SK-N-SH (cell line): ENCODE measurements at regions of chr10 and their contacts with region 1.

Region 1: DNA sequence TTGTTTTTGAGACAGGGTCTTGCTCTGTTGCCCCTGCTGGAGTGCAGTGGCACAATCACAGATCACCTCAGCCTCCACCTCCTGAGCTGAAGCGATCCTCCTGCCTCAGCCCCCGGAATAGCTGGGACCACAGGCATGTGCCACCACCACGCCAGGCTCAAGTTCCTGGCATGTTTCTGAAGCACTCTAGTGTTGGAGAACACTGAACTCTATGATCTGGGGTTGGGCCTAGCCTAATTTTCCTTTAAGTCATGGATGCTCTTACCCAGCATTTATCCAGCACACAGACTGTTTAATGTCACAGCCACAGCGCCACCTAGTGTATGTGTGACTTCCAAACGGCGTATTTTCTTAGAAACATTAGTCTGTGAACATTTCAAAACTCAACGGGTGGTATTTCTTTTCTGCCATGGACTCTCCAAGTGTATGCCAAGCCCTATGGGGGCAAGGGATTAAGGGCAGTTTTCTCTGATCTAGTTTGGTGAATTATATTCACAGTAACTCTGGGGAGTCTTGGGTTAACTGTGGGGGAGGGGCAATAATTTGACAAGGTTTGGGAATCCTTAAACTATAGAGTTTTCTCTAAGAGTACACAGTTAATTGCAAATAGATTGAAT is 91.8 kb downstream of the CREM start:
- DNase-seq: peak; percentile 69
- H3K4me3 ChIP-seq: no peak overlapping the region; a peak in 1 of 4 replicates
- H3K27ac ChIP-seq: no peak overlapping the region
- H3K4me1 ChIP-seq: peaks cover 0 to 2% of the 10 kb centered on the region in 2 experiments; a peak in 3 of 4 replicates
- H3K27me3 ChIP-seq: no peaks in the 10 kb centered on the region
- CTCF ChIP-seq: peak; percentile 89
- EP300 ChIP-seq: no peak
- RAD21 ChIP-seq: peak; percentile 87

Region 2: DNA sequence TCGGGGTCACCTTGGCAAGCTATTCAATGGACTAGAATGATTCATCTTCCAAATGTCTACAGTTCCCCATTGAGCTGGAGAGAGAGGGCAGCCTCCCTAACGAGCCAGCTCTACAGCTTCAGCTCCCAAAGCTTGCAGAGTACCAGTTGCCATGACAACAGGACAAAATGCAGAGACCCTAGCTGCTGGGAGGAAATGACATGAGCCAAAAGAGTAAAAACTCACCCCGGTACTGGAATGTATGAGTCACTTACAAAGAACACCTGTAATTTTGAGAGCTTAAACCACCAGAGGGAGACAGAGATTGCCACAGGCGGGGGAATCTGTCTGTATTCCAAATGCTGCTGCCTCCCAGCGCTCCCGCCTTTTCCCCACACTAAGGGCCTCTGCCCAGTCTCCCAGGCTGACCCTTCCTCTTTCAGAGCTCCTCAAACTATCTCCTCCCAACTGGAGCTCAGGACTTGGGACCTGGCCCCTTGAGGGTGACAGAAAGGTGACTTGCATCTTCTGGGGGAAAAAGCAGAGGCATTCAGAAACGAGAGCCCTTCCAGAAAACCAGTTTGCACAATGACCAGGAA is 223.8 kb before region 1 on chr10:
- CTCF ChIA-PET with region 1: interaction called, 15 read pairs
- POLR2A ChIA-PET with region 1: no interaction called
- DNase-seq: peak; percentile 72
- H3K4me3 ChIP-seq: no peak overlapping the region
- H3K27ac ChIP-seq: no peak overlapping the region
- H3K4me1 ChIP-seq: no peaks in the 10 kb centered on the region; a peak in 1 of 4 replicates
- H3K27me3 ChIP-seq: no peaks in the 10 kb centered on the region
- CTCF ChIP-seq: peak; percentile 73
- EP300 ChIP-seq: no peak
- RAD21 ChIP-seq: peak; percentile 79

Region 3: DNA sequence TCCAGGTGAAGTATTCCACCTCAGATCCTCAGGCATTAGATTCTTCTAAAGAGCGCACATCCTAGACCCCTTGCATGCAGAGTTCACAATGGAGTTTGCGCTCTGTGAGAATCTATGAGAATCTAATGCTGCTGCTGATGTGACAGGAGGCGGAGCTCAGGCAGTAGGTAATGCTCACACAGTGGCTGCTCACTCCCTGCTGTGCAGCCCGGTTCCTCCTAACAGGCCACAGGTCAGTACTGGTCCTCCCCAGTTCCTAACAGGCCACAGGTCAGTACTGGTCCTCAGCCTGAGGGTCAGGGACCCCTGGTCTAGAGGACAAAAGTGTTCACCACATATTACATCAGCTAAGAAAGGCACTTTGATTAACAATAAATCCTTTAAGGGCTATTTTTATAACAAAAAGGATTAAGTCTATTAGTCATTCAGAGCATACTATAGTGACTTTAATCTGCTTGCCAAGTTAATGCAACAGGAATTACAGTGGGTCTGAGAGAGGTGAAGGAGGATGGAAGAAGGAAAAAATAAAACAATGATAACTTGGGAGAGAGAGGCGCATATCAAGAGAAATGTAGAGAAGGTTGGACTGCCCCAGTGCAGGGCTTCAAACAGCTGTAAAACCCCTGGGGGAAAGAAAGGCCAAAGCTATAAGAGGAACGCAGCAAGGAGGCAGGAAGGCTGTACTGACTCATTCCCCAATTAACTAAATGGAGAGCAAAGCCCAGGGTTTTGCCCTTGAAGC is 177.5 kb before region 1 on chr10:
- CTCF ChIA-PET with region 1: no interaction called
- POLR2A ChIA-PET with region 1: no interaction called
- DNase-seq: no peak
- H3K4me3 ChIP-seq: no peak overlapping the region
- H3K27ac ChIP-seq: peak overlapping the region in 1 of 2 experiments; percentile 83; a peak in 2 of 4 replicates
- H3K4me1 ChIP-seq: peaks cover 0 to 18% of the 10 kb centered on the region in 2 experiments; a peak in 2 of 4 replicates
- H3K27me3 ChIP-seq: no peaks in the 10 kb centered on the region
- CTCF ChIP-seq: no peak
- EP300 ChIP-seq: no peak
- RAD21 ChIP-seq: no peak

Region 4: GRCh38 chr10:35119378-35119777 is 99.1 kb before region 1 on chr10:
- CTCF ChIA-PET with region 1: interaction called, 82 read pairs
- POLR2A ChIA-PET with region 1: interaction called, 5 read pairs
- DNase-seq: no peak
- H3K4me3 ChIP-seq: no peak overlapping the region
- H3K27ac ChIP-seq: no peak overlapping the region
- H3K4me1 ChIP-seq: no peaks in the 10 kb centered on the region
- H3K27me3 ChIP-seq: no peaks in the 10 kb centered on the region
- CTCF ChIP-seq: no peak
- EP300 ChIP-seq: no peak
- RAD21 ChIP-seq: no peak

Region 5: DNA sequence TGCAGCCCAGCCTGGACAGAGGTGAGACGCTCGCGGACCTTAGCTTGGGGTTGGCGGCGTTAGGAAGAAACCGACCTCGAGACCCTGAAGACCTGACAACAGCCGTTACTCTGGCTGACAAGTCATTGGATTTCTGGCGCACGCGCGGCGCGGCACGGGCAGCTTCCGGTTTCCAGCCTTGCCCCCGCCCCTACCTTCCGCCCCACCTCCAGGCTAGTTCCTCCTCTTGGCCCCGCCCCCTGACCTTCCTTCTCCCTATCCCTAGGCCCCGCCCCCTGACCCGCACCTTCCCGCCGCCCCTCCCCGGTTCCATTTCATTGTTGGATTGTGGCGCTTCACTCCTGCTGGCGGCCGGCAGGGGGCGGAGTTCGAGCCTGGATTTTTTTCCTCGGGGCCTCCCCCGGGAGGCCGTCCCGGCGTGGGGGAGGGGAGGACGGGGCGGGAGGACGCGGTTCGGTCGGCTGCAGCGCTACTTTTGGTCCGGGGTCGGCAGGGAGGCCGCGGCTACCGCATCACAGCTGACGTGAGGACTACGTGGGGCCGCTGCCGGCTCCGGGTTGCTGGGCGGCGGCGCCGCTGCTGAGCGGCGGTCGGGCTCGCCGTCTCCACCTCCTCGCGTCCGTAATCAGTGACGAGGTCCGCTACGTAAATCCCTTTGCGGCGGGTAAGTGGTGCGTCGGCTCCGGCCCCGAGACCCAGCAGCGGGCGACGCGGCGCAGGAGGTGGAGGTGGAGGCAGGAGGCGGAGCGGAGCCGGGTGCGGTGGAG is 91.7 kb before region 1 on chr10 and contains the start of gene CREM:
- CTCF ChIA-PET with region 1: interaction called, 82 read pairs
- POLR2A ChIA-PET with region 1: interaction called, 3 read pairs
- DNase-seq: peak; percentile 97
- H3K4me3 ChIP-seq: peak within 1 kb of the TSS; percentile 80 to 95
- H3K27ac ChIP-seq: peak within 1 kb of the TSS; percentile 94 to 99
- H3K4me1 ChIP-seq: peaks cover 0 to 24% of the 10 kb centered on the region in 2 experiments; a peak in 3 of 4 replicates
- H3K27me3 ChIP-seq: no peaks in the 10 kb centered on the region
- CTCF ChIP-seq: peak; percentile 76
- EP300 ChIP-seq: no peak
- RAD21 ChIP-seq: peak; percentile 56
- polyA plus RNA-seq, gene CREM: 41.4 TPM in 2 replicates

Region 6: DNA sequence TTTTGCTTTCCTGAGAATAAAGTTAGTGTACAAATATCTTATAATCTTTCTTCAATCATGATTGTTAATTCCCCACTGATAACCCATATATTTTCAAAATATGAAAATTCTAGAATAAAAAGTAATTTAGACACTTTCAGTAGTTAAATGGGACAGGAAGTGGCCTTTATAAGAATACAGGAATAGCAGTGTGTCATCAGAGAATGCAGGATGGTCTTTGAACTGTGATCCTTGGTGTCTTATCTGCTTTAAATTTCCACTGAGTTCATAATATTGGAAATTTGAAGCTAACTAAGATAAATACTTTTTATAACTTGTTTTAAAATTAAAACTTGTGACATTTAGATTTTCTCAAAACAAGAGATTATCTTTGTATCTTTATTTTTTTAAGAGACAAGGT is 16.4 kb before region 1 on chr10:
- CTCF ChIA-PET with region 1: interaction called, 14 read pairs
- POLR2A ChIA-PET with region 1: no interaction called
- DNase-seq: no peak
- H3K4me3 ChIP-seq: no peak overlapping the region
- H3K27ac ChIP-seq: no peak overlapping the region
- H3K4me1 ChIP-seq: no peaks in the 10 kb centered on the region; a peak in 1 of 4 replicates
- H3K27me3 ChIP-seq: no peaks in the 10 kb centered on the region
- CTCF ChIP-seq: no peak
- EP300 ChIP-seq: no peak
- RAD21 ChIP-seq: no peak

Region 7: GRCh38 chr10:35300063-35300699 is 81.7 kb after region 1 on chr10:
- CTCF ChIA-PET with region 1: no interaction called
- POLR2A ChIA-PET with region 1: no interaction called
- DNase-seq: no peak
- H3K4me3 ChIP-seq: no peak overlapping the region
- H3K27ac ChIP-seq: no peak overlapping the region
- H3K4me1 ChIP-seq: no peaks in the 10 kb centered on the region
- H3K27me3 ChIP-seq: no peaks in the 10 kb centered on the region
- CTCF ChIP-seq: no peak
- EP300 ChIP-seq: no peak
- RAD21 ChIP-seq: no peak